HCT116 (cell line): ENCODE measurements at regions of chr3 and their contacts with region 1.

Region 1: GRCh38 chr3:136752422-136753325 is 496 bp upstream of the STAG1 start:
- DNase-seq: peak; percentile 96
- ATAC-seq: peak; percentile 88
- H3K4me3 ChIP-seq: peak overlapping the region; percentile 74 to 76
- H3K27ac ChIP-seq: peak overlapping the region; percentile 99
- H3K4me1 ChIP-seq: peaks cover 22 to 38% of the 10 kb centered on the region in 2 experiments
- H3K27me3 ChIP-seq: no peaks in the 10 kb centered on the region
- CTCF ChIP-seq: peak; percentile 25 to 82 (median 80); a peak in 3 of 6 replicates
- POLR2A ChIP-seq: peak; percentile 71
- RAD21 ChIP-seq: peak; percentile 59

Region 2: DNA sequence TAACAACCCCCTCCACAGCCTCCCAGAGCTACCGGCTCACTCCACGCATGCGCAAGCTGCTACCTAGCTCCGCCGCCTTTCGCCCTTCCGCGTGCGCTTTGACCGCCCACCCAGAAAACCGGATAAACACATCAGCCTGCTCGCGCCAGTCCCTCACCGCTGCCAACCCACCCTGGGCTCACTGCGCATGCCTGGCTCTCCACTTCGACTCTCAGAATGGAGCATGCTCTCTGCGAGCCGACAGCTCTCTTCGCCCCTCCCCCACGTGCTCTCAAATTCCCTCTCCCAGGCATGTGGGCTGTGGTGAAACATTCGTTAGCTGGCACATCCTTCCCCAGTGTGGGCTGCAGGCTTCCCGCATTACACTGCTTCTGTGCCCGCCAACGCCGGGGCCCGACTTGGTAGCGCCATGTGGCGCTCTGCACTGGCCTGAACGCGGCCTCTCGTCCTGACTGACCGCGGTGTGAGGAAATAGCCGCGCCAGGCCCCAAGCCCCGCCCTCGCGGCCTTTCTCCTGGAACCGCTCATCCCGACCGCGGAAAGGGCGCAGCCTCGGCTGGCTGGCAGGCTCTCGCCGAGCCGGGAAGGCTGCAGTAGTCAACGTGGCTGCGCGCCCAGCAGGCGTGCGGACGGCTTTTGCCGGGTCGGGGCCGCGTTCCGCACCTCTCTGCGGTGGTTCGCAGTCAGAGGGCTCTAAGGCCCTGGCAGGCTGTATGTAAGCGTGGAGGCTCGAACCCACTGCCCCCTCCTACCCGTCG is 556.1 kb before region 1 on chr3:
- CTCF ChIA-PET with region 1: no interaction called
- POLR2A ChIA-PET with region 1: interaction called, 3 read pairs
- RAD21 ChIA-PET with region 1: interaction called in 1 of 2 experiments, 10 read pairs
- intact Hi-C with region 1: loop called (anchors 2 kb)
- DNase-seq: peak; percentile 99
- ATAC-seq: peak; percentile 80
- H3K4me3 ChIP-seq: peak overlapping the region; percentile 52 to 83
- H3K27ac ChIP-seq: peak overlapping the region; percentile 96
- H3K4me1 ChIP-seq: peaks cover 32 to 44% of the 10 kb centered on the region in 2 experiments
- H3K27me3 ChIP-seq: no peaks in the 10 kb centered on the region
- CTCF ChIP-seq: no peak
- POLR2A ChIP-seq: peak; percentile 56
- RAD21 ChIP-seq: no peak

Region 3: DNA sequence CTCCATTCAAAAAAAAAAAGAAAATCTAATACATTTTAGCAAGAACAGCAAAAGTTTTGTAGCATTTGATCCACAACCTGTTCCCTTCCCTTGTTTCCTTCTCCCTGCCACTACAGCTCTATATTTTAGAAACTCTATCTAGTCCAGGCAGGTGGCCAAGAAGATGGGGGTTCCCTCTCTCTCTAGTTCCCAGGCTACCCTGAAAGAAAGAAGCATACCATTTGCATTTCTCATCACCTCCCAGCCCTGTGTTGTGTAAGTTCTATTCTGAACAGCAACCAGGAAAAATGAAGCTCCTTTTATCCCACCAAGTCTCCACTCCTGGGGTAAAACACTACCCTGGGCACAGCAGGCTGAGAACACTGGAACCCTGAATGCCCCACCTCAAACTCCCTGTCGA is 402.5 kb before region 1 on chr3:
- CTCF ChIA-PET with region 1: interaction called, 10 read pairs
- POLR2A ChIA-PET with region 1: no interaction called
- RAD21 ChIA-PET with region 1: interaction called in 1 of 2 experiments, 3 read pairs
- intact Hi-C with region 1: no loop called
- DNase-seq: no peak
- ATAC-seq: no peak
- H3K4me3 ChIP-seq: no peak overlapping the region
- H3K27ac ChIP-seq: no peak overlapping the region
- H3K4me1 ChIP-seq: peaks cover 4 to 7% of the 10 kb centered on the region in 2 experiments; a peak in 1 of 4 replicates
- H3K27me3 ChIP-seq: no peaks in the 10 kb centered on the region
- CTCF ChIP-seq: no peak
- POLR2A ChIP-seq: no peak
- RAD21 ChIP-seq: no peak

Region 4: DNA sequence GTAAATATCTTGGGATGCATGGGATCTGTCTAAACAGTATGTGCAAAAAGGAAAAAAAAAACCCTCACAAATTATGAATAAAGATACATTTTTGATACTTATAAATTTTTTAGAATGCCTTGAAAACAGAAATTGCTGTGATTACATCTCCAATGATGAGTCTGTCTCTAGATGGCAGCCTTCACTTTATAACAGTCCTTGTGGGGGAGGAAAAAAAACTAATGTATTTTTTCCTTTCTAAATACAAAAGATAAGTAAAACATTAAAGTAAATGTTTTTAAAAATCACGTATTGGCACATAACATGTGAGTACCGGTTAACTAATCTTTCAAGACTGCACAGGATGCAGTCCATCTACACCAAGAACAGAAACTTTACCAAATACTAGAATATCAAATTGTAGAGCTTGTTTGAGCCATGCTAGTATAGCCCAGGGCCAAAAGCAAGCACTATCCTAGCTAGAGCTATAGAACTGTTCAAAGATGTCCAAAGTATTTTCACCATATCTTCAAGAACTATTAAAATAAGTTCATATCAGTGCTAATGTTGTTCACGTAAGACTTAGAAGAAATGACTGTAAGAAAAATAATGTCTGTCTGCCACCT is 206.9 kb before region 1 on chr3:
- CTCF ChIA-PET with region 1: interaction called, 31 read pairs
- POLR2A ChIA-PET with region 1: interaction called, 4 read pairs
- RAD21 ChIA-PET with region 1: interaction called, 3 to 10 read pairs
- intact Hi-C with region 1: loop called (anchors 2 kb)
- DNase-seq: no peak
- ATAC-seq: no peak
- H3K4me3 ChIP-seq: no peak overlapping the region
- H3K27ac ChIP-seq: no peak overlapping the region
- H3K4me1 ChIP-seq: peaks cover 0 to 7% of the 10 kb centered on the region in 2 experiments; a peak in 1 of 4 replicates
- H3K27me3 ChIP-seq: no peaks in the 10 kb centered on the region
- CTCF ChIP-seq: peak in 2 of 3 experiments; percentile 11 to 87; a peak in 3 of 6 replicates
- POLR2A ChIP-seq: no peak
- RAD21 ChIP-seq: peak; percentile 68

Region 5: DNA sequence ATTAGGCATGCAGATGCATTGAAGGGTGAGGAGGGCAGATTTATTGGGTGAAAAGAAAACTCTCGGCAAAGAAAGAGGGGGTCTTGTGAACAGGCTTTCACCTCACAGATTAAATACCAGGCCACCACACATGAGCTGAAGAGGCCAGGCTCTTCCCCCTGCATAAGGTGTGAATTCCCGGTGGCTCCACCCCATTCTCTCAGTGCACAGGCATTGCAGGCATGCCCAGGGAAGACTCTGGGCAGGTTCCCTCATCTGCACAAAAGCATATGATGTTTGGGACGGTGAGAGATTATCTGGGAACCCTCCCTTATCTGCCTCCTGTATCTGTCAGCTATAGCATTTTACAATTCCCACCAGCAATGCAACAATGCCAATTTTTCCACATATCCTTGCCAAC is 59.0 kb after region 1 on chr3:
- CTCF ChIA-PET with region 1: no interaction called
- POLR2A ChIA-PET with region 1: no interaction called
- RAD21 ChIA-PET with region 1: no interaction called
- intact Hi-C with region 1: no loop called
- DNase-seq: no peak
- ATAC-seq: no peak
- H3K4me3 ChIP-seq: no peak overlapping the region
- H3K27ac ChIP-seq: no peak overlapping the region
- H3K4me1 ChIP-seq: no peaks in the 10 kb centered on the region
- H3K27me3 ChIP-seq: no peaks in the 10 kb centered on the region
- CTCF ChIP-seq: no peak
- POLR2A ChIP-seq: no peak
- RAD21 ChIP-seq: no peak

Region 6: DNA sequence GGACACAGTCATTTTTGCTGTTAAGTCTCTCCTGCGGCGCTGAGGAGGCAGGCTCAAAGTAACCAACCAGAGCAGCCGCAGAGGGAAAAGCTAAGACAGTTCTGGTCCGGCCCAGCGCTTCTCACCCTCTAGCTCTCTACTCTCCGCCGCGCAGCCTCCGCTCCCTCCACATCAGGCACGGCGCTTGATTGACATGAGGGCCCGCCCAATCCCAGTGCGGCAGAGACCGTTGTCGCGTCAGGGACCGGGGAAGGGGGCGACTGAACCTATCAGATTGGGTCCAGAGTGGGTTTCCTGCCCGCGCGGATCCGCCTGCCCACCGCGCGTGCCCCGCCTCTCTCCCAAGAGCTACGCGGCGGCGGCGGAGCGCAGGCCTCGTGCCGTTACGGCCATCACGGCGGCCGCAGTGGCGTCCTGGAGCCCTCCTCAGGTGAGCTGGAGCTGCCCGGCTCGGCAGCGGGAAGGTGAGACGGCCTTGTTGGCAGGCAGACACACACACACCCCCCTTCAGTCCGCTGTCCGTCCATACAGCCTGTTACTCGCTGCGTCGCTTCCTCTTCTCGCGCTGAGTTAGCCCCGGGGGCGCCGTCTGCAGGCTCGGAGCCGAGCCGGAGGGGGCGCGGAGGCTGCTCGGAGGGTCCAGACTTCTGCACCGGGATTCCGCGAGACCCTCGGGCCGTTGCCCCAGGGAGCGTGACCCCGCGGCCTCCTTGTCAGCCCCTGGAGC is 109.4 kb after region 1 on chr3 and contains the start of gene NCK1:
- CTCF ChIA-PET with region 1: interaction called, 5 read pairs
- POLR2A ChIA-PET with region 1: interaction called, 3 read pairs
- RAD21 ChIA-PET with region 1: interaction called in 1 of 2 experiments, 4 read pairs
- intact Hi-C with region 1: loop called (anchors 2 kb)
- DNase-seq: peak; percentile 94
- ATAC-seq: peak; percentile 97
- H3K4me3 ChIP-seq: peak within 1 kb of the TSS; percentile 89 to 97
- H3K27ac ChIP-seq: peak within 1 kb of the TSS; percentile 90
- H3K4me1 ChIP-seq: peaks cover 9 to 20% of the 10 kb centered on the region in 2 experiments; a peak in 3 of 4 replicates
- H3K27me3 ChIP-seq: no peaks in the 10 kb centered on the region
- CTCF ChIP-seq: peak in 2 of 3 experiments; percentile 12 to 17; a peak in 3 of 6 replicates
- POLR2A ChIP-seq: peak; percentile 82
- RAD21 ChIP-seq: peak; percentile 20; the same call in 1 of the 2 replicates
- total RNA-seq, gene NCK1: 25.6 TPM

Region 7: DNA sequence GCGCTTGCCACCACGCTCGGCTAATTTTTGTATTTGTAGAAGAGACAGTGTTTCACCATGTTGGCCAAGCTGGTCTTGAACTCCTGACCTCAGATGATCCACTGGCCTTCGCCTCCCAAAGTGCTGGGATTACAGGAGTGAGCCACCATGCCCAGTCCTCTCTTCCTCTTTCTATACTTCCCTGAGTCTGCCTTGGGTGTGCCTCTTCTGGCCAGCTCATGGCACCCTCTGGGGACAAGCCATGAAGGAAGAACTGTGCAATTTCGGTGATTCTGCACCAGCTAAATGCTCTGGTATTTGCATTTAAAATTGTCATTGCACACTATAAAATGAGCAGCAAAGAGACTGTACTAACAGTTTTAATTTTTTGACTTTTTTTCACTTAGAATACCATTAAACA is 271.7 kb after region 1 on chr3:
- CTCF ChIA-PET with region 1: no interaction called
- POLR2A ChIA-PET with region 1: no interaction called
- RAD21 ChIA-PET with region 1: no interaction called
- intact Hi-C with region 1: no loop called
- DNase-seq: no peak
- ATAC-seq: no peak
- H3K4me3 ChIP-seq: no peak overlapping the region
- H3K27ac ChIP-seq: no peak overlapping the region
- H3K4me1 ChIP-seq: no peaks in the 10 kb centered on the region
- H3K27me3 ChIP-seq: no peaks in the 10 kb centered on the region
- CTCF ChIP-seq: no peak
- POLR2A ChIP-seq: no peak
- RAD21 ChIP-seq: no peak